ENCODE measurements at regions of chr5 and their contacts with region 1.

Region 1: DNA sequence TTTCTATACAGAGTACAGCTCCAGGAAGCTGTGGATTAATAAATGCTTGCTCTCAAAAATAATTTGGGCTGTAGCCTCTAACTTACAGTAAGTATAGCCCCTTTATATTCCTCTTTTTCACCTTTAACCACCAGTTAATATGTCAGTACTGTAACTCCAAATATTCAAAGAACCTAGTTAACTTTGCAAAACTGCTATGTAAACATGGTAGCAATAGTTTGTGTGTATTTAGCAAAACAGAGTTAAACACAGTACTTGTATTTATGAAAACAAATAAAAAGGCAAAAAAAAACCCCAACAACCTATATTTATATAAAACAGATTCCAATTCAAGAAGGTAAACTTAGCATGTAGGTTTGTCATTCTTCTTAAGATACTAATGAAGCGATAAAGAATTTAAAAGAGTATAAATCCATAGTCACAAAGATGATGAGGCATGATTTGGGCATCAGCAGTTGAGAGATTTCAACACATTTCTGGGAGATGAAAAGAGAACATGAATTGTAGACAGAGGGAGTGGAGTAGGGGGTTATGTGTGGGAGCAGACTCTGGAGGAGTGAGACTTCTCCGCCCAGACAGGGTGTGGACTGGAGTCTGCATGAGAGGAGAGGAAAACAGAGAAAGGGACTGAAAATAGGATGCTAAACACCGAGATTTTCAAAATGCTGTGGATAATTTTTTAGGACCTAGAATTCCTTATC is 47.0 kb upstream of the F2RL1 start:
- DNase-seq: no peak
- ATAC-seq: no peak
- H3K4me3 ChIP-seq: no peak overlapping the region
- H3K27ac ChIP-seq: no peak overlapping the region
- H3K4me1 ChIP-seq: no peaks in the 10 kb centered on the region
- H3K27me3 ChIP-seq: no peaks in the 10 kb centered on the region
- CTCF ChIP-seq: no peak

Region 2: DNA sequence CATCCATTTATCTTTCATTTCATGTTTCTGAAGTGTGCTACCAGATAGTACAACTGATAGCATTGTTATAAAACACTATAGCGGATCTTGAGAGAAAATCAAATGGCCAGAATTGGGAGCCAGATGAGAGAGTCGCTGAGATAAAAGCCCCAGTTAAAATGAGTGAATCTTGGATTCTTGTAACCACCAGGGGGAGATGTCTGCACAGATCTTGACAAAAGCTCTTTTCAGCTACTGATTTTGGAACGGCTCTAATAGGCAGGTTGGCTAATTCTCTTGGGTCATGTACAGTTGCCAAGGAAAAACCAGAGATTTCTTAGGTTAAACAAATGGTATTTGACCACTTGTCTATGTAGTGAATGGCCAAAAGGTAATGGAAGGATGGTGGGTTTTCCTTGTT is 170.4 kb before region 1 on chr5:
- intact Hi-C with region 1: loop called in 1 of 2 experiments (anchors 5 kb)
- DNase-seq: no peak
- ATAC-seq: no peak
- H3K4me3 ChIP-seq: no peak overlapping the region
- H3K27ac ChIP-seq: no peak overlapping the region
- H3K4me1 ChIP-seq: no peaks in the 10 kb centered on the region
- H3K27me3 ChIP-seq: peaks cover 0 to 3% (median 0%) of the 10 kb centered on the region in 3 donors
- CTCF ChIP-seq: peak; percentile 53

Measured in psoas muscle (tissue), 8 donors.